ENCODE measurements at regions of chr10 and their contacts with region 1.

Region 1: DNA sequence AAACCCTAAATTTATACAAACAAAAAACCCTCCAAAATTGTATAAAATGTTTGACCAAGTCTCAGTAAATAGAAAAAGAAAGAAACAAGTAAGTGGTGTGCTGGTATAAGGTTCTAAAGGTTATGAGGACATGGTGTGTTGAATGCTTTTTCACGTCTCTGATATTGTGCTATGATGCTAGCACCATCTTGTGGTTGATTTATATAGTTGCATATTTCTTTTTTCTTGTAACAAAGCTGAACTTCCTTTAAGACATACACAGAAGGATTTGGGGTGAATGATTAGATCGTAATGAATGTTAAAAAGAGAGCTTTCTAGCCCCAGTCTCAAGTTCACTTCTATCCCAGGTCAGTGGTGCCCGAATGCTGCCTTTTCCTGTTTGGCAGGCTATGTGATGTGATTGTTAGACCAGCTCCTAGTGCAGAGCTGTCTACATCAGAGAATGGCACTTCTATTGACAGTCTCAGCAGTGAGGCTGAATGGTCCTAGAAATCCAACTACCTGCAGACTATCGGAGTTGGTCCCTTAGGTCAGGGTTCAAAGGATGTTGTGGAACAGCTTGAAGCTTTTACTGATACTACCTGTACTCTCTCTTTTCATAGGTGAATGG is 25.0 kb downstream of the VTI1A start:
- DNase-seq: peak in 4 of 5 donors; percentile 28 to 41 (median 34)
- H3K4me3 ChIP-seq: no peak overlapping the region
- H3K4me3 Mint-ChIP-seq: no peak overlapping the region
- H3K27ac ChIP-seq: no peak overlapping the region
- H3K27ac Mint-ChIP-seq: peak overlapping the region in 5 of 7 donors; percentile 1 to 77 (median 9)
- H3K4me1 ChIP-seq: no peaks in the 10 kb centered on the region
- H3K4me1 Mint-ChIP-seq: peaks cover 12 to 15% (median 13%) of the 10 kb centered on the region in 4 donors
- H3K27me3 ChIP-seq: no peaks in the 10 kb centered on the region
- H3K27me3 Mint-ChIP-seq: no peaks in the 10 kb centered on the region

Region 2: GRCh38 chr10:112461029-112461887 is 10.7 kb before region 1 on chr10:
- CTCF ChIA-PET with region 1: interaction called, 18 read pairs
- POLR2A ChIA-PET with region 1: no interaction called
- intact Hi-C with region 1: no loop called
- DNase-seq: no peak
- H3K4me3 ChIP-seq: no peak overlapping the region
- H3K4me3 Mint-ChIP-seq: no peak overlapping the region
- H3K27ac ChIP-seq: no peak overlapping the region
- H3K27ac Mint-ChIP-seq: peak overlapping the region in 3 of 7 donors; percentile 12 to 60 (median 29)
- H3K4me1 ChIP-seq: no peaks in the 10 kb centered on the region
- H3K4me1 Mint-ChIP-seq: peaks cover 5 to 23% (median 12%) of the 10 kb centered on the region in 4 donors
- H3K27me3 ChIP-seq: no peaks in the 10 kb centered on the region
- H3K27me3 Mint-ChIP-seq: no peaks in the 10 kb centered on the region

Region 3: GRCh38 chr10:112490545-112490944 is 18.6 kb after region 1 on chr10:
- CTCF ChIA-PET with region 1: interaction called, 20 read pairs
- POLR2A ChIA-PET with region 1: interaction called, 3 read pairs
- intact Hi-C with region 1: no loop called
- DNase-seq: no peak
- H3K4me3 ChIP-seq: no peak overlapping the region
- H3K4me3 Mint-ChIP-seq: no peak overlapping the region
- H3K27ac ChIP-seq: no peak overlapping the region
- H3K27ac Mint-ChIP-seq: no peak overlapping the region
- H3K4me1 ChIP-seq: no peaks in the 10 kb centered on the region
- H3K4me1 Mint-ChIP-seq: peaks cover 4 to 15% (median 5%) of the 10 kb centered on the region in 4 donors
- H3K27me3 ChIP-seq: no peaks in the 10 kb centered on the region
- H3K27me3 Mint-ChIP-seq: no peaks in the 10 kb centered on the region

Measured in CD4-positive, alpha-beta memory T cell (primary cell).